Breast epithelium (tissue), 4 donors: ENCODE measurements at regions of chr1 and their contacts with region 1.

Region 1: GRCh38 chr1:6245086-6245868 is 1.3 kb downstream of the HES3 start:
- DNase-seq: peak in 1 of 2 donors; percentile 75
- H3K4me3 ChIP-seq: no peak overlapping the region
- H3K27ac ChIP-seq: no peak overlapping the region
- H3K4me1 ChIP-seq: peaks cover 8 to 10% of the 10 kb centered on the region in 2 donors
- H3K27me3 ChIP-seq: peaks cover 31 to 83% of the 10 kb centered on the region in 2 donors
- CTCF ChIP-seq: peak; percentile 54 to 86 (median 55)
- POLR2A ChIP-seq: no peak

Region 2: DNA sequence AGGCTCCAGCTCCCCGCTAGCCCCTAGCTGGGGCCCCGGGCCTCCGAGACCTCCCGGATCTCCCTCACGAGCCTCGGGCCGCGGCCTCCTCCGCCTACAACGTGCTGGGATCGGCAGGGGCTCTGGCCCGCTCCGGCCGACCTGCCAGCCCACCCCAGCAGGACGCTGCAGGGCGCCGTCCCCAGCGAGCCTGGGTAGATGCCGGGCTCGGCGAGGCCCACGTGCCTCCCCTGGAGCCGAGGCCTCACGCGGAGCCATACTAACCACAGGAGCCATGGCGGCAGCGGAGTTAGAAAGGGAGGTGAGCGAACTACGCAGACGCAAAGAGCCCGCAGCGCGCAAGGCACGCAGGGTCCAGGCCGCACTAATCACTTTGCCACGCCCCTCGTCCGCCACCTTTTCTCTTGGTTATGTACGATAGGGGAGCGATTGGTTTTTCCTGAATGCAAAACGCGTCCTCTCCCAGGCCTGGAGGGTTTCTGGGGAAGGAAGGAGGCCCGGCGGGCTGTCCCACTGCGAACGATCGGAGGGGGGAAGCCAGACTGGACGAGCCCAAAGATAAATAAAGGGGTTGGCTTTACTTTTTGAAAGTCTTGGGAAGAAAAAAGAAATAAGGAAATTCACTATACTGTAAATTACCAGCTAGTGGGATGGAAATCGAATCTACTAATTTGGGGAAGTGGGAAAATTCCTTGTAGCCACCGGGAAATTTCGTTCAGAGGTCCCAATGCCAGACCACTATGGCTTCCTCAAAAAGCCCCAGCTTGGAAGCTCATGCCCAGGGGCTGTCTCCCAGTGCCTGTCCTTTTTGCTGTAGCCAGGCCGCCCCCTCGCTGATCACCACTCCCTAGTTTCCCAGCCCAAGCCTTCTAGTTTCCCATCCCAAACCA is 45.7 kb before region 1 on chr1 and contains the start of gene RPL22:
- intact Hi-C with region 1: no loop called
- DNase-seq: peak; percentile 98
- H3K4me3 ChIP-seq: peak within 1 kb of the TSS; percentile 96 to 99 (median 99)
- H3K27ac ChIP-seq: peak within 1 kb of the TSS; percentile 80 to 83
- H3K4me1 ChIP-seq: peaks cover 0 to 6% of the 10 kb centered on the region in 2 donors
- H3K27me3 ChIP-seq: no peaks in the 10 kb centered on the region
- CTCF ChIP-seq: no peak
- POLR2A ChIP-seq: no peak
- total RNA-seq, gene RPL22: 210 to 329 (median 306) TPM

Region 3: GRCh38 chr1:6343506-6344405 is 98.5 kb after region 1 on chr1:
- intact Hi-C with region 1: loop called (anchors 2 kb)
- DNase-seq: peak in 1 of 2 donors; percentile 49
- H3K4me3 ChIP-seq: no peak overlapping the region
- H3K27ac ChIP-seq: no peak overlapping the region
- H3K4me1 ChIP-seq: no peaks in the 10 kb centered on the region
- H3K27me3 ChIP-seq: no peaks in the 10 kb centered on the region
- CTCF ChIP-seq: peak in 2 of 3 donors; percentile 65 to 69
- POLR2A ChIP-seq: no peak

Region 4: GRCh38 chr1:6998267-6998666 is 753.0 kb after region 1 on chr1:
- intact Hi-C with region 1: no loop called
- DNase-seq: no peak
- H3K4me3 ChIP-seq: no peak overlapping the region
- H3K27ac ChIP-seq: no peak overlapping the region
- H3K4me1 ChIP-seq: no peaks in the 10 kb centered on the region
- H3K27me3 ChIP-seq: no peaks in the 10 kb centered on the region
- CTCF ChIP-seq: no peak
- POLR2A ChIP-seq: no peak